ENCODE measurements at regions of chr9 and their contacts with region 1.

Region 1: GRCh38 chr9:68584189-68585033 is 43.7 kb upstream of the TMEM252 start:
- DNase-seq: peak; percentile 79 to 89 (median 80)
- ATAC-seq: peak; percentile 100
- H3K4me3 ChIP-seq: no peak overlapping the region
- H3K4me1 ChIP-seq: no peaks in the 10 kb centered on the region
- CTCF ChIP-seq: peak; percentile 92

Region 2: GRCh38 chr9:68685770-68686169 is 101.4 kb after region 1 on chr9:
- intact Hi-C with region 1: loop called in 1 of 2 experiments (anchors 2 kb)
- DNase-seq: peak in 2 of 3 donors; percentile 51 to 84
- ATAC-seq: peak; percentile 92
- H3K4me3 ChIP-seq: no peak overlapping the region
- H3K4me1 ChIP-seq: no peaks in the 10 kb centered on the region
- CTCF ChIP-seq: peak; percentile 31

Region 3: GRCh38 chr9:69027355-69028096 is 443.1 kb after region 1 on chr9:
- intact Hi-C with region 1: loop called in 1 of 2 experiments (anchors 10 kb)
- DNase-seq: peak in 1 of 3 donors; percentile 64
- ATAC-seq: peak; percentile 89
- H3K4me3 ChIP-seq: no peak overlapping the region
- H3K4me1 ChIP-seq: no peaks in the 10 kb centered on the region
- CTCF ChIP-seq: peak; percentile 48

Measured in mucosa of descending colon (tissue), 3 donors.